HAP-1 (cell line): ENCODE measurements at regions of chr5 and their contacts with region 1.

Region 1: DNA sequence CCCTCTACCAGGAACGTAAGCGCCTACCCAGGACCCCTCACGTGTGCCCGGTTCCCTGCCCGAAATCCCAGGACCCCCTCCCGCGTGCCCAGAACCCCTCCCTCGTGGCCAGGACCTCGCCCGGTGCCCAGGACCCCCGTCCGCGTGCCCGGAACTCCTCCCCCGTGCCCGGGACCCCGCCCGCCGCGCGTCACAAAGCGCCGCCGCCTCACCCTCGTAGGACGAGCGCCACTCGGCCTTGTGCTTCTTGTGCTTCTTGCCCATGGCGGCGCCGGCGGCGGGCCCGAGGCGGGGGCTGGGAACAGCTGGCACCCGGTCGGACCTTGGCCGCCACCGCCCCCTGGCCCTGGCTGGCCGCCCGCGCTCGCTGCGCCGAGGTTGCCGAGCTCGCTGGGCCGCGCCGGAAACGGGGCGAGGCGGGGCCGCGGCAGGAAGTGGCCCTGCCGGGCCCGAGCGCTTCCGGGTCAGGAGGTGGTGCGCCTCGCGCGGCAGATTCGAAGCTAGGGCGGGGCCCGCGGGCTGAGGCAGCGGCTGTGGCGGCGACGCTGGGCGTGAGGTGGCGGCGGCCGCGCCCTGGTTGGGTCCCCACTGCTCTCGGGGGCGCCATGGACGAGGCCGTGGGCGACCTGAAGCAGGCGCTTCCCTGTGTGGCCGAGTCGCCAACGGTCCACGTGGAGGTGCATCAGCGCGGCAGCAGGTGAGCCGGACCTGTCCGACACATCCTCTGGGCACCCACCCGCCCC is at the starts of genes BRD9 and TRIP13:
- DNase-seq: peak; percentile 74 to 89
- H3K4me3 ChIP-seq: peak within 1 kb of the TSS; percentile 80
- H3K4me1 ChIP-seq: peaks cover 7% of the 10 kb centered on the region
- H3K27me3 ChIP-seq: no peaks in the 10 kb centered on the region

Region 2: DNA sequence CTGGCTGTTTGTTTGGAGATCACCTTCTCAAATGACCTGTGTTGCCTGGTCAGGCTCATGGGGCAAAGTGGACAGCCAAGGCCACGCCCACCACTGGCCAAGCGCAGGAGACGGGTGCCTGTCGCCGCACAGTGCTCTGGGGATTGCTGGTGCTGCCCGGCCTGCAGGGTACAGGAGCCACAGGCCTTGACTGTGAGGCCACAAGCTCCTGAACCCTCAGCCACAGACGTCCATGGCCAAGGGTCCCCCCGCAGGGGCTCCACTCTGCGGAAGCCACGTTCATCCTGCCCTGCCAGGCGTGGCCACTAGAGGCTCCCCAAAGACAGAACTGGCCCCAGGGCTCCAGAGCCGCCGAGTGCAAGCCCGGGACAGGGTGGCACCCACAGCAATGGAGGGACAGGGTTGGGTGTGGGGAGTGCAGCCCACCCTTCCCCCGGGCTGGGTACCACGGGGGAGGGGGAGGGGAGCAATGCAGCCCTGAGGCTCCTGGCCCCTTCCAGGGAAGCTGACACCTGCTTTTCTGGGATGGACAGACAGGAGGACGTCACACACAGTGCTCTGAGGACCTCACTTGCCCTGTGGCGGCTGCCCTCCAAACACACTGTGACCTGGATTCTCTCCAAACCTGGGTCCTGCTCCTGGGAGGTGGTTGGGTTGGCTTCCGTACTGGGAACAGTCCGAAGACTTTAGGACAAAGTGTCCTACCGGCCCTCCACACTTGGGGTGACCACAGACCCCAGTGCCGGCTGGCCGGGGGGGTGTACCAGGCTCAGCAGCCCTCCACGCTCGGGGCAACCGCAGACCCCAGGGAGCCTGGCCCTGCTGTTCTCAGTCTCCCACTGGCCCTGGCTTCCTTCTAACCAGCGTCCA is 220.9 kb before region 1 on chr5:
- in situ Hi-C with region 1: loop called (anchors 10 kb)
- DNase-seq: peak; percentile 57 to 89
- H3K4me3 ChIP-seq: no peak overlapping the region
- H3K4me1 ChIP-seq: peaks cover 16% of the 10 kb centered on the region
- H3K27me3 ChIP-seq: no peaks in the 10 kb centered on the region